PC-3 (cell line): ENCODE measurements at regions of chr20 and their contacts with region 1.

Region 1: DNA sequence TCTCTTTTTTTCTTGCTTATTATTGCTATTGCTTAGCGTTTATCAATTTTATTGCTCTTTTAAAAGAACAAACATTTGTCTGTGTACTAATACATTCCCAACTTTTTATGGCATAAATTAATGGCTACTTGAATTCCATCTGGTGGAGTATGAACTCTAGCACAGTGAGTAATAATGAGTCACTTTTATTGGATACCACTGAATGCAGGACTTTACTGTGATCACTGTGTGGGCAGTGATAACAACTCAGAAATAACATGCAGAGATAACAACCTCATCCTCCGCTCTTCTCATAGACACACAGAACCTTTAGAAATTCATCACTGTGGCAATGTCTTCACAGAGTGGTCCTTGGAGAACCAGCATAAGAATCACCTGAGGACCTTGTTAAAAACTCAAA is 174.9 kb upstream of the PRND start:
- DNase-seq: peak; percentile 97
- ATAC-seq: peak; percentile 80
- H3K4me3 ChIP-seq: no peak overlapping the region
- H3K27ac ChIP-seq: peak overlapping the region; percentile 80
- H3K4me1 ChIP-seq: peaks cover 62% of the 10 kb centered on the region
- H3K27me3 ChIP-seq: no peaks in the 10 kb centered on the region
- CTCF ChIP-seq: no peak

Region 2: DNA sequence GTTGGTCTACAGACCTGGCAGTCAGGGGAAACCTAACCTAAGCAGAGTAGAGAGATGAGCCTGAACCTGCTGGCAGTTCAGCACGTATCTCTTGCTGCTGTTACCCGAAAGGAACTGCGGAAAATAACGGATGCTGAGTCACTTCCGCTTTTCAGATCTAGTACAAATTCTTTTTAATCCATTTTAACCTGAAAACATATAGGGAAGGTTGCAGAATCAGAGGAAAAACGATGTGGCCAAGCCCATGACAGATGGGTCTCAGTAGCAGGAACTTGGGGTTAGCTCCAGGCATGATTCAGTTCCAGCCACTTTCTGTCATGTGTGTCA is 177.0 kb before region 1 on chr20:
- CTCF ChIA-PET with region 1: no interaction called
- POLR2A ChIA-PET with region 1: no interaction called
- intact Hi-C with region 1: no loop called
- DNase-seq: no peak
- ATAC-seq: no peak
- H3K4me3 ChIP-seq: no peak overlapping the region
- H3K27ac ChIP-seq: no peak overlapping the region
- H3K4me1 ChIP-seq: no peaks in the 10 kb centered on the region
- H3K27me3 ChIP-seq: no peaks in the 10 kb centered on the region
- CTCF ChIP-seq: no peak

Region 3: DNA sequence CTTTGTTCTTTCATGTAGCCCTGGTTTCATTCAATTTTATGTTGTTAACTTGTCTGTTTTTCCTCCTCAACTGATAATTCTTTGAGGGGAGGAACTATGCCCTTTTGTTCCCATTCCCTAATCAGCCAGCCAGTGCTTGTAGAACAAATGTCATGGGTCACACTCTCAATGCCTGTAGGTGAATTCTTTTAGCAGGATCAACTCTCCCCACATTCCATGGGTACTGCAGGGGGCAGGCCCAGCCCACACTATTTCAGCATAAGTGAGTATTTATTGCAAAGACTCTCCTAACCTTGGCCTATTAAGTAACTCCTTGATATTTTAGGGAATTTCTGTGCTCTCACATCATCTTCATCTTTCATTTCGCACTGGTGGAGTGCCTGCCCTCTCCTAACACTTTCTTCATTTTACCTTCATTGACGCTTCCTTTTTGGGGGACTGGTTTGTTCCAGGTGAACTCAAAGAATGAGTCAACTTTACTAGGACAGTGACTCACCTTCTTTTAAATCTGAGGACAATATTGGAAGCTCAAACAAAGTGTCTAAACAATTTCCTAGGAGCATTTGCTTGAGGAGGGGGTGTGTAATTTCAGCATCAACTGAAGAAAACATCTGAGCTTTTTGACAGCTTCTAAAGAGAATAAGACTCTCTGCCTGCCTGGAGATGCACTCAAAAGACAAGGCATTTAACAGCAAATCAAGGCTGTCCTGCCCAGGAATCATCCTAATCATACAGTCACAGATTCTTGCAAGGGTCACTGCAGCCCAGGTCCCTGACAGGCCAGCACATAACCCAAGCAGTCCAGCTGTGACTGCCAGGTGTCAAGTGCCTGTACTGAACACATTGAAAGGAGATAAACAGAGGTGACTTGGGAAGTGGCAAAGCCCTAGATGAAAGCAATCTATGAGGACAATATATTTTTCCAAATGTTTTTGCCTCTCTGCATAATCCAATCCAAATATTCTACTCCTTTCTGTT is 88.9 kb before region 1 on chr20:
- CTCF ChIA-PET with region 1: no interaction called
- POLR2A ChIA-PET with region 1: no interaction called
- intact Hi-C with region 1: loop called (anchors 5 kb)
- DNase-seq: peak; percentile 93
- ATAC-seq: peak; percentile 75
- H3K4me3 ChIP-seq: peak overlapping the region; percentile 21; the same call in 1 of the 2 replicates
- H3K27ac ChIP-seq: peak overlapping the region; percentile 84
- H3K4me1 ChIP-seq: peaks cover 52% of the 10 kb centered on the region
- H3K27me3 ChIP-seq: no peaks in the 10 kb centered on the region
- CTCF ChIP-seq: no peak

Region 4: GRCh38 chr20:4470375-4470774 is 76.4 kb before region 1 on chr20:
- CTCF ChIA-PET with region 1: no interaction called
- POLR2A ChIA-PET with region 1: no interaction called
- intact Hi-C with region 1: no loop called
- DNase-seq: peak; percentile 63
- ATAC-seq: peak; percentile 82
- H3K4me3 ChIP-seq: no peak overlapping the region
- H3K27ac ChIP-seq: peak overlapping the region; percentile 28; the same call in 1 of the 2 replicates
- H3K4me1 ChIP-seq: peaks cover 31% of the 10 kb centered on the region
- H3K27me3 ChIP-seq: no peaks in the 10 kb centered on the region
- CTCF ChIP-seq: no peak

Region 5: GRCh38 chr20:4512891-4513550 is 33.8 kb before region 1 on chr20:
- CTCF ChIA-PET with region 1: no interaction called
- POLR2A ChIA-PET with region 1: no interaction called
- intact Hi-C with region 1: loop called (anchors 1 kb)
- DNase-seq: peak; percentile 99
- ATAC-seq: peak; percentile 79
- H3K4me3 ChIP-seq: peak overlapping the region; percentile 40
- H3K27ac ChIP-seq: peak overlapping the region; percentile 94
- H3K4me1 ChIP-seq: peaks cover 42% of the 10 kb centered on the region
- H3K27me3 ChIP-seq: no peaks in the 10 kb centered on the region
- CTCF ChIP-seq: no peak

Region 6: GRCh38 chr20:4563534-4563933 is 16.7 kb after region 1 on chr20:
- CTCF ChIA-PET with region 1: no interaction called
- POLR2A ChIA-PET with region 1: no interaction called
- intact Hi-C with region 1: no loop called
- DNase-seq: peak; percentile 78
- ATAC-seq: peak; percentile 66
- H3K4me3 ChIP-seq: no peak overlapping the region
- H3K27ac ChIP-seq: no peak overlapping the region
- H3K4me1 ChIP-seq: peaks cover 19% of the 10 kb centered on the region
- H3K27me3 ChIP-seq: no peaks in the 10 kb centered on the region
- CTCF ChIP-seq: peak; percentile 43

Region 7: DNA sequence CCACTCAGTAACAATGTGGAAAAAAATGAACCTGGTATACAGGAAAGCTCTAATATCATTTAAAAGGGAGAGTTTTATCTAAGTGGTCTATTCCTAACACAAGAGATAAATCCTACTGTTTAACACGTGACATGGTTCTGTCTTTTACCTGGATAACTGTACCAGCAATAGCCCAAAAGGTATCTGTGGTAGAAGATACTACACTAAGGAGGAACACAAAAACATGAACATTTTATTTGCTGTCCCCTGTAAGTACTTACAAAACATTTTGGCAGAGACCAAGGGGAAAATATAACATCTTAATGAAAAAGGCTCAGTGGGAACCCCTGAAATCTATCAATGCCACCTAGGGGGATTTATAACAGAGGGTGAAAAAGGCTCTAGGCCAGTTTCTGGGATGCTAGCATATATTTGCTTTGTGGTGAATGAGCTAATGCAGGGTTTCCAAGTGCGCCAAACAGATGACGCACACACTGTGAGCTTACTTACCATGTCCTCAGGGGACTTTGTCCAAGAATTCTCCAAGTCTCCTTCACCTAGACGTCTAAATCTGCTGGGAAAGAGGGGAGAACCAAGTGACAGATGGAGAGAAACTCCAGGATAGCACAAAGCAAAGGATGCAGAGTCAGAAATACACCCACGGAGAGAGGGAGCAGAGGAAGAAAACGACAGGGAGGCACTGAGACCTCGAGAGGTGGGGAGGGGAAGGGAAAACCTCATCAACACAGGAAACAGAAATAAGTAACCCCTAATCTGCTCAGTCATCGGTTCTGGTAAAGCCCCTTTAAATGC is 27.0 kb after region 1 on chr20:
- CTCF ChIA-PET with region 1: interaction called, 3 read pairs
- POLR2A ChIA-PET with region 1: no interaction called
- intact Hi-C with region 1: loop called (anchors 2 kb)
- DNase-seq: peak; percentile 97
- ATAC-seq: peak; percentile 98
- H3K4me3 ChIP-seq: peak overlapping the region; percentile 38
- H3K27ac ChIP-seq: peak overlapping the region; percentile 94
- H3K4me1 ChIP-seq: peaks cover 23% of the 10 kb centered on the region
- H3K27me3 ChIP-seq: no peaks in the 10 kb centered on the region
- CTCF ChIP-seq: 0 out of 2 replicates have a peak, but pooled peaks have one; percentile 17

Region 8: GRCh38 chr20:4585104-4585753 is 38.4 kb after region 1 on chr20:
- CTCF ChIA-PET with region 1: no interaction called
- POLR2A ChIA-PET with region 1: no interaction called
- intact Hi-C with region 1: loop called (anchors 5 kb)
- DNase-seq: peak; percentile 15
- ATAC-seq: no peak
- H3K4me3 ChIP-seq: no peak overlapping the region
- H3K27ac ChIP-seq: no peak overlapping the region
- H3K4me1 ChIP-seq: no peaks in the 10 kb centered on the region
- H3K27me3 ChIP-seq: no peaks in the 10 kb centered on the region
- CTCF ChIP-seq: no peak